CD4-positive, alpha-beta T cell (primary cell): ENCODE measurements at regions of chr22 and their contacts with region 1.

Region 1: GRCh38 chr22:21952586-21953571 is at the start of gene PPM1F:
- DNase-seq: peak; percentile 79 to 96 (median 90)
- ATAC-seq: peak; percentile 91
- H3K4me3 ChIP-seq: peak within 1 kb of the TSS; percentile 73
- H3K4me3 Mint-ChIP-seq: peak within 1 kb of the TSS; percentile 89
- H3K27ac ChIP-seq: no peak within 1 kb of the TSS
- H3K27ac Mint-ChIP-seq: peak within 1 kb of the TSS; percentile 33
- H3K4me1 ChIP-seq: peaks cover 18% of the 10 kb centered on the region
- H3K4me1 Mint-ChIP-seq: peaks cover 25% of the 10 kb centered on the region
- H3K27me3 ChIP-seq: no peaks in the 10 kb centered on the region
- H3K27me3 Mint-ChIP-seq: no peaks in the 10 kb centered on the region
- CTCF ChIP-seq: peak; percentile 57
- total RNA-seq, gene PPM1F: 18.0 to 18.3 TPM

Region 2: GRCh38 chr22:21712894-21713712 is 239.8 kb before region 1 on chr22:
- CTCF ChIA-PET with region 1: interaction called, 10 read pairs
- POLR2A ChIA-PET with region 1: no interaction called
- intact Hi-C with region 1: loop called in 1 of 2 experiments (anchors 1 kb)
- DNase-seq: peak; percentile 34 to 80 (median 48)
- ATAC-seq: peak; percentile 95
- H3K4me3 ChIP-seq: no peak overlapping the region
- H3K4me3 Mint-ChIP-seq: no peak overlapping the region
- H3K27ac ChIP-seq: no peak overlapping the region
- H3K27ac Mint-ChIP-seq: no peak overlapping the region
- H3K4me1 ChIP-seq: peaks cover 6% of the 10 kb centered on the region
- H3K4me1 Mint-ChIP-seq: peaks cover 7% of the 10 kb centered on the region
- H3K27me3 ChIP-seq: no peaks in the 10 kb centered on the region
- H3K27me3 Mint-ChIP-seq: no peaks in the 10 kb centered on the region
- CTCF ChIP-seq: peak; percentile 66

Region 3: DNA sequence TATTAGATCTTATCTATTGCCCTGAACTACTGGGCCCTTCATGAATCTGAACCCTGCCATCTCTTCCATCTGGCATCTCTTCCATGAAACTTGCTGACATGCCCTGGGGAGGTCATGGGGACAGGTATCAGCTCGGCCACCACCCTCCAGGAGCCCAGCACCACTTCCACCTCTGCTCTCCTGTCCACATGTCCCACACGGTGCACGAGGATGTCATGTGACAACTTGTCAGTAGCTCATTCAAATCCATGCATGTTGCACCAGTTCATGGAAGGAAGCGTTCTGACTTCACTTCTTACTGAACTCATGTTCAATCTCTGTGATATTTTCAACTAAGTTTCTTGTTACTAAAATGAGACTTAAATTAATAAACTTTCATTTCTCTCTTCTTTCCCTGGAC is 233.9 kb before region 1 on chr22:
- CTCF ChIA-PET with region 1: interaction called, 10 read pairs
- POLR2A ChIA-PET with region 1: no interaction called
- intact Hi-C with region 1: no loop called
- DNase-seq: no peak
- ATAC-seq: no peak
- H3K4me3 ChIP-seq: no peak overlapping the region
- H3K4me3 Mint-ChIP-seq: no peak overlapping the region
- H3K27ac ChIP-seq: no peak overlapping the region
- H3K27ac Mint-ChIP-seq: no peak overlapping the region
- H3K4me1 ChIP-seq: no peaks in the 10 kb centered on the region
- H3K4me1 Mint-ChIP-seq: no peaks in the 10 kb centered on the region
- H3K27me3 ChIP-seq: no peaks in the 10 kb centered on the region
- H3K27me3 Mint-ChIP-seq: no peaks in the 10 kb centered on the region
- CTCF ChIP-seq: no peak

Region 4: DNA sequence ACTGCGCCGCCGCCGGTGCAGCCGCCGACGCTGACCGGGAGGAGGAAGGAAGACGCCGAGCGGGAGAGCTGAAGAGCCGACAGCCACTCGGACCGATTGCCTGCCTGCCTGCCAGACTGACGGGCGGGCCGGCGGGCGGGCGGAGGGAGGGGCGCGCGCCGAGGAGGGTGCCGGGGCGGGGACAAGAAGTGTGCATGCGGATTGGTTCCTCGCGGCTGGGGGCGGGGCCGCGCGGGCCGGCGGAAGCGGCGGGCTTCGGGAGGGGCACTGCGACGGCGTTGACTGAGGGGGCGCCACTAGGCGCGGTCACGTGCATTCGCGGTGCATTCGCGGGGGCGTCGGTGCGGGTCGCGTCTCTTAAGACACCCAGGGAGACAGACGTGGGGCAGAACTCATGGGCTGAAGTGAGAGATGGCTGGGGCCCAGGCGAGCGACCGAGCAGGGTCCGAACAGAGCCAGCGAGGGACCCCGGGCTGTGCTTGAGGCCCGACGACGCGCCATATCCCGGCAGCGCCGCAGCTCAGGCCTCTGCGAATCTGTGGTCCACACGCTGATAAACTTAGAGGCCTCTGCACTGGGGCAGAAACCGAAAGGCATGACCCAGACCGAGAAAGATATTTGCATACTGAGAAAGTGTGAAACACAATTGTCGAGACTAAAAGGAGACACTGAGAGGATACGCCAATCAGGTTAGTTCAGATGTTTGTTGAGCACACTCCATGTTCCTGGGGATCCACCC is 85.2 kb before region 1 on chr22 and contains the start of gene MAPK1:
- CTCF ChIA-PET with region 1: no interaction called
- POLR2A ChIA-PET with region 1: no interaction called
- intact Hi-C with region 1: loop called in 1 of 2 experiments (anchors 5 kb)
- DNase-seq: peak; percentile 85 to 97 (median 91)
- ATAC-seq: peak; percentile 95
- H3K4me3 ChIP-seq: peak within 1 kb of the TSS; percentile 65
- H3K4me3 Mint-ChIP-seq: peak within 1 kb of the TSS; percentile 98
- H3K27ac ChIP-seq: peak within 1 kb of the TSS; percentile 72 to 84
- H3K27ac Mint-ChIP-seq: peak within 1 kb of the TSS; percentile 92
- H3K4me1 ChIP-seq: peaks cover 37% of the 10 kb centered on the region
- H3K4me1 Mint-ChIP-seq: peaks cover 54% of the 10 kb centered on the region
- H3K27me3 ChIP-seq: no peaks in the 10 kb centered on the region
- H3K27me3 Mint-ChIP-seq: no peaks in the 10 kb centered on the region
- CTCF ChIP-seq: peak; percentile 52
- total RNA-seq, gene MAPK1: 39.4 to 44.0 TPM

Region 5: GRCh38 chr22:21938071-21938822 is 14.6 kb before region 1 on chr22:
- CTCF ChIA-PET with region 1: interaction called, 117 read pairs
- POLR2A ChIA-PET with region 1: interaction called, 26 read pairs
- intact Hi-C with region 1: loop called (anchors 1 to 2 kb)
- DNase-seq: peak; percentile 79 to 95 (median 88)
- ATAC-seq: peak; percentile 97
- H3K4me3 ChIP-seq: peak overlapping the region; percentile 67
- H3K4me3 Mint-ChIP-seq: peak overlapping the region; percentile 78
- H3K27ac ChIP-seq: peak overlapping the region; percentile 42 to 55
- H3K27ac Mint-ChIP-seq: peak overlapping the region; percentile 79
- H3K4me1 ChIP-seq: peaks cover 55% of the 10 kb centered on the region
- H3K4me1 Mint-ChIP-seq: peaks cover 37% of the 10 kb centered on the region
- H3K27me3 ChIP-seq: no peaks in the 10 kb centered on the region
- H3K27me3 Mint-ChIP-seq: no peaks in the 10 kb centered on the region
- CTCF ChIP-seq: peak; percentile 99

Region 6: GRCh38 chr22:21972293-21972779 is 19.5 kb after region 1 on chr22:
- CTCF ChIA-PET with region 1: interaction called, 10 read pairs
- POLR2A ChIA-PET with region 1: no interaction called
- intact Hi-C with region 1: no loop called
- DNase-seq: peak in 13 of 14 experiments; percentile 29 to 68 (median 45)
- ATAC-seq: peak; percentile 76
- H3K4me3 ChIP-seq: no peak overlapping the region
- H3K4me3 Mint-ChIP-seq: no peak overlapping the region
- H3K27ac ChIP-seq: no peak overlapping the region
- H3K27ac Mint-ChIP-seq: no peak overlapping the region
- H3K4me1 ChIP-seq: peaks cover 4% of the 10 kb centered on the region
- H3K4me1 Mint-ChIP-seq: peaks cover 5% of the 10 kb centered on the region
- H3K27me3 ChIP-seq: no peaks in the 10 kb centered on the region
- H3K27me3 Mint-ChIP-seq: no peaks in the 10 kb centered on the region
- CTCF ChIP-seq: peak; percentile 87

Region 7: GRCh38 chr22:21982338-21982965 is 29.6 kb after region 1 on chr22 and contains the start of gene TOP3B:
- CTCF ChIA-PET with region 1: interaction called, 10 read pairs
- POLR2A ChIA-PET with region 1: interaction called, 5 read pairs
- intact Hi-C with region 1: no loop called
- DNase-seq: peak; percentile 69 to 89 (median 77)
- ATAC-seq: peak; percentile 94
- H3K4me3 ChIP-seq: peak within 1 kb of the TSS; percentile 80
- H3K4me3 Mint-ChIP-seq: peak within 1 kb of the TSS; percentile 94
- H3K27ac ChIP-seq: peak within 1 kb of the TSS; percentile 55 to 76
- H3K27ac Mint-ChIP-seq: peak within 1 kb of the TSS; percentile 84
- H3K4me1 ChIP-seq: peaks cover 14% of the 10 kb centered on the region
- H3K4me1 Mint-ChIP-seq: peaks cover 49% of the 10 kb centered on the region
- H3K27me3 ChIP-seq: no peaks in the 10 kb centered on the region
- H3K27me3 Mint-ChIP-seq: no peaks in the 10 kb centered on the region
- CTCF ChIP-seq: no peak
- total RNA-seq, gene TOP3B: 60.2 to 62.8 TPM